Body of pancreas (tissue), 4 donors: ENCODE measurements at regions of chr5 and their contacts with region 1.

Region 1: DNA sequence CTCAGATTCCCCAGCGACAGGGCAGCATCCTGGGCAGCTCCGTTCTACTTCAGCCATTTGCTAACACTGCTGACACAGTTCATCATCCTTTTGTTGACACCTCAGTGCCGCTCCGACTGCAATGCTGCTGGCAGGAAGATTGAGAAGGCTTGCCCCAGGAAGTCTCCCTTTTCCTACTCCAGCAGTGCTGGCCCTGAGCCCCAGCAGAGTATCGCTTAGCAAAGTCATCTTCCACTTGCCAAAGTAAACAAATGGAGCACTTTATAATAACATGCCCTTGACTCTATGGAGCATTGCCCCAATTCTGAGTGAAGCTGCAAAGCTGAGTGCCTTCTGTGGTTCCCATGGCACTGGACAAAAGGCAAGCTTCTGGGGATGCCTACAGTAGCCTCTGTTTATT is 32.2 kb downstream of the PRLR start:
- DNase-seq: peak; percentile 83 to 93 (median 92)
- ATAC-seq: peak; percentile 97
- H3K4me3 ChIP-seq: no peak overlapping the region
- H3K27ac ChIP-seq: peak overlapping the region; percentile 4 to 71 (median 50)
- H3K4me1 ChIP-seq: peaks cover 20% of the 10 kb centered on the region
- H3K27me3 ChIP-seq: no peaks in the 10 kb centered on the region
- CTCF ChIP-seq: no peak
- POLR2A ChIP-seq: no peak

Region 2: GRCh38 chr5:35089334-35090314 is 108.5 kb before region 1 on chr5:
- intact Hi-C with region 1: loop called (anchors 10 kb)
- DNase-seq: peak; percentile 64 to 75 (median 74)
- ATAC-seq: peak; percentile 77
- H3K4me3 ChIP-seq: no peak overlapping the region
- H3K27ac ChIP-seq: no peak overlapping the region
- H3K4me1 ChIP-seq: peaks cover 3% of the 10 kb centered on the region
- H3K27me3 ChIP-seq: no peaks in the 10 kb centered on the region
- CTCF ChIP-seq: peak; percentile 65 to 89 (median 84)
- POLR2A ChIP-seq: no peak